ENCODE measurements at regions of chr5 and their contacts with region 1.

Region 1: DNA sequence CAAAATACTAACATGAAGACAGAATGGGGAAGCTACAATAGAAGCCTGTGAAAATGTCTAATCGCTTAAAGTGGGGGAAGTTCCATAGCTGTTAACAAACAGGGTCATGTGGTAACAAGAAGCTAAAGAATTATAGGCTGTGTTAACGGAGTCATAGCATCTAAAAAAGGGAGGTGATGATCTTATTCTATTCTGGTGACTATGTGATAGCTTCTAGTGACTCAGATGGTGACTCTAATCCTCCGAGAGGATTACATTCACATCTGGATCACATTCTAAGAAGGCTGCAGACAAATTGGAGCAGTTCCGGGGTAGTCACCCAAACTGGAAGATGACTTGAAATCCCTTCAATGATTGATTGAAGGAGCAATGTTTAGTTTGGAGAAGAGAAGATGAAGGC is 142.1 kb downstream of the LIFR start:
- DNase-seq: no peak
- H3K4me3 ChIP-seq: no peak overlapping the region
- H3K27ac ChIP-seq: no peak overlapping the region
- H3K4me1 ChIP-seq: no peaks in the 10 kb centered on the region
- H3K27me3 ChIP-seq: peaks cover 60% of the 10 kb centered on the region
- CTCF ChIP-seq: no peak

Region 2: DNA sequence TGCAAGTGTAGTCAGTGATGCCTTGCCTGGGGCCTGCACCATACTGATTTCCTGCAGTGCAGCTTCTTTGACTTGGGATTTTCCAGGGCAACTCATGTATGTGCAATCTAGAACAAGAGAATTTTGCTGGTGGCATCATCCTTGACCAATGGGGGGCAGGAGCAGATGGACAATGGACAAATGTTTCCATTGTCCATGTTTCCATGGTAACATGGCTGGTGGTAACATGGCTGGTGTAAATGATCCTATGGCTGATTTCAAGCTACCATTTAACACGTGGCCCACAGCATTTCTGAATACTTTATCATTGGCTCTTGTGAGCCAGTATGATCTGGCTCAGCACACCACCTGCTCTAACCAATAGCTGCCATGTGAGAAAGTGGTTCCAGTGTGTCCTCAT is 301.3 kb after region 1 on chr5:
- CTCF ChIA-PET with region 1: interaction called, 10 read pairs
- POLR2A ChIA-PET with region 1: no interaction called
- intact Hi-C with region 1: no loop called
- DNase-seq: no peak
- H3K4me3 ChIP-seq: no peak overlapping the region
- H3K27ac ChIP-seq: no peak overlapping the region
- H3K4me1 ChIP-seq: no peaks in the 10 kb centered on the region
- H3K27me3 ChIP-seq: peaks cover 6% of the 10 kb centered on the region; the same call in 1 of the 2 replicates
- CTCF ChIP-seq: no peak